Activated CD8-positive, alpha-beta T cell treated with anti-CD3 and anti-CD28 coated beads for 36 hours (primary cell): ENCODE measurements at regions of chr19 and their contacts with region 1.

Region 1: GRCh38 chr19:48618916-48619691 is at the starts of genes RPL18 and SPHK2:
- DNase-seq: peak; percentile 98
- ATAC-seq: peak; percentile 76
- H3K4me3 Mint-ChIP-seq: peak within 1 kb of the TSS; percentile 93
- H3K27ac Mint-ChIP-seq: peak within 1 kb of the TSS; percentile 100
- H3K4me1 Mint-ChIP-seq: peaks cover 38% of the 10 kb centered on the region
- H3K27me3 Mint-ChIP-seq: no peaks in the 10 kb centered on the region
- CTCF ChIP-seq: no peak
- total RNA-seq, gene RPL18: 2,304 to 2,324 TPM
- total RNA-seq, gene SPHK2: 22.3 to 22.9 TPM

Region 2: DNA sequence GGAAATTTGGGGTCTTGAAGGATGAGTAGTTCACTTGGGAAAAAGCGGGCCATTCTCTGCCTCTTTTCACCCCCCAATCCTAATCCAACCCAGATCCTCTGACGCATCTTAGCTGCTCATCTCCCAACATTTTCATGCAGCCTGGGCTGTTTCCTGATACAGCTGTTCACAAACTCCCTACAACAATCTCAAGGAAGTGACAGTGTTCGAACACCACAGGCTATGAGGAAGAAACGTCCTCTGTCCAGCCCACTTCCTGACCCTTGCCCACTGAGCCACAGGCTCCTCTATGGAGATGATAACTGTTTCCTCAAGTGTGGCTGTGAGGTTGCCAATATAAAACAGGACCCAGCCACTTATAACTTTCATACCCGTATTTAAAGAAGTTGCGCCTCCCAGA is 123.7 kb before region 1 on chr19:
- CTCF ChIA-PET with region 1: no interaction called
- POLR2A ChIA-PET with region 1: no interaction called
- intact Hi-C with region 1: no loop called
- DNase-seq: no peak
- ATAC-seq: no peak
- H3K4me3 Mint-ChIP-seq: no peak overlapping the region
- H3K27ac Mint-ChIP-seq: no peak overlapping the region
- H3K4me1 Mint-ChIP-seq: peaks cover 25% of the 10 kb centered on the region
- H3K27me3 Mint-ChIP-seq: peaks cover 21% of the 10 kb centered on the region
- CTCF ChIP-seq: no peak

Region 3: GRCh38 chr19:48513289-48514122 is 105.6 kb before region 1 on chr19:
- CTCF ChIA-PET with region 1: no interaction called
- POLR2A ChIA-PET with region 1: interaction called, 11 read pairs
- intact Hi-C with region 1: no loop called
- DNase-seq: peak; percentile 88
- ATAC-seq: peak; percentile 71
- H3K4me3 Mint-ChIP-seq: no peak overlapping the region
- H3K27ac Mint-ChIP-seq: peak overlapping the region; percentile 82
- H3K4me1 Mint-ChIP-seq: peaks cover 19% of the 10 kb centered on the region
- H3K27me3 Mint-ChIP-seq: no peaks in the 10 kb centered on the region
- CTCF ChIP-seq: no peak

Region 4: GRCh38 chr19:48596679-48597465 is 22.2 kb before region 1 on chr19:
- CTCF ChIA-PET with region 1: no interaction called
- POLR2A ChIA-PET with region 1: interaction called, 11 read pairs
- intact Hi-C with region 1: no loop called
- DNase-seq: peak; percentile 70
- ATAC-seq: peak; percentile 79
- H3K4me3 Mint-ChIP-seq: peak overlapping the region; percentile 71
- H3K27ac Mint-ChIP-seq: peak overlapping the region; percentile 87
- H3K4me1 Mint-ChIP-seq: no peaks in the 10 kb centered on the region
- H3K27me3 Mint-ChIP-seq: no peaks in the 10 kb centered on the region
- CTCF ChIP-seq: no peak

Region 5: DNA sequence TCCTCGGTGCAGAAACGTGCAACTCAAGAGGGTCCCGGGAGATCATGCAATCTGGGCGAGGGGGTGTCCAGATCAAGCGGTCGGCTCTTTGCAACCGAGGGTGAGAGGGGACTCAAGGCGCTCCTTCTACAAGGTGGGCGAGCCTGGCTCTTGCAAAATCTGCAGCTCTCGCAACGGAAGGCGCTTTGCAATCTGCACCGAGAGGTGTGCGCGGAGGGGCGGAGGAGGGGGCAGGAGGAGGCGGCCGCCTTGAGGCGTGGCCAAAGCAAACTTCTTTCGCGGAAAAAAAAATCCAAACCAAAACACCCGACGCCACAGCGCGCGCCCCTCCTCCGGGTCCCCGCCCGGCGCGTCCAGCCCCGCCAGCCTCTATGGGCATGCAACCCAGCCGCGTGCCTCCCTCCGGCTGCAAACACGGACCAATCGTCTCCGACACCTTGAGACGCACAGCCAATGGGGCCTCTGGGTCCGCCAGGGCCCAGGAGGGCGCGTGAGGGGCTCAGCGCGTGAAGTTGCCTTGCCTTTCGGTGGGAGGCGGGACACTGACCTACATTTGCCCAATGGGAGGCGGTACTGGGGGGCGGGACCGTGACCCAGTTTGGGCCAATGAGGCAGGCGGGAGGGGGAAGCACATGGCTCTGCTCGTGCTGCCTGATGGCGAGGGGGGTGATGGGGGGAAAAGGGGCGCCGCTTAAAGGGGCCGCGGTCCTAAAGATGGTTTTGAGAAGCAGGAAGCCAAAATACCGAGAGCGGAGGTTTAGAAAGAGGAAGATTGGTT is 18.3 kb after region 1 on chr19 and contains the start of gene DBP:
- CTCF ChIA-PET with region 1: interaction called, 4 read pairs
- POLR2A ChIA-PET with region 1: interaction called, 154 read pairs
- intact Hi-C with region 1: no loop called
- DNase-seq: peak; percentile 100
- ATAC-seq: peak; percentile 76
- H3K4me3 Mint-ChIP-seq: peak within 1 kb of the TSS; percentile 88
- H3K27ac Mint-ChIP-seq: peak within 1 kb of the TSS; percentile 98
- H3K4me1 Mint-ChIP-seq: peaks cover 55% of the 10 kb centered on the region
- H3K27me3 Mint-ChIP-seq: no peaks in the 10 kb centered on the region
- CTCF ChIP-seq: peak; percentile 17
- total RNA-seq, gene DBP: 10.8 to 13.1 TPM